ENCODE measurements at regions of chr11 and their contacts with region 1.

Region 1: GRCh38 chr11:63745304-63746170 is 23.0 kb downstream of the ZFTA start:
- DNase-seq: no peak
- ATAC-seq: peak; percentile 44

Region 2: GRCh38 chr11:63667995-63668795 is 77.3 kb before region 1 on chr11:
- intact Hi-C with region 1: loop called in 1 of 2 experiments (anchors 10 kb)
- DNase-seq: no peak
- ATAC-seq: no peak

Region 3: DNA sequence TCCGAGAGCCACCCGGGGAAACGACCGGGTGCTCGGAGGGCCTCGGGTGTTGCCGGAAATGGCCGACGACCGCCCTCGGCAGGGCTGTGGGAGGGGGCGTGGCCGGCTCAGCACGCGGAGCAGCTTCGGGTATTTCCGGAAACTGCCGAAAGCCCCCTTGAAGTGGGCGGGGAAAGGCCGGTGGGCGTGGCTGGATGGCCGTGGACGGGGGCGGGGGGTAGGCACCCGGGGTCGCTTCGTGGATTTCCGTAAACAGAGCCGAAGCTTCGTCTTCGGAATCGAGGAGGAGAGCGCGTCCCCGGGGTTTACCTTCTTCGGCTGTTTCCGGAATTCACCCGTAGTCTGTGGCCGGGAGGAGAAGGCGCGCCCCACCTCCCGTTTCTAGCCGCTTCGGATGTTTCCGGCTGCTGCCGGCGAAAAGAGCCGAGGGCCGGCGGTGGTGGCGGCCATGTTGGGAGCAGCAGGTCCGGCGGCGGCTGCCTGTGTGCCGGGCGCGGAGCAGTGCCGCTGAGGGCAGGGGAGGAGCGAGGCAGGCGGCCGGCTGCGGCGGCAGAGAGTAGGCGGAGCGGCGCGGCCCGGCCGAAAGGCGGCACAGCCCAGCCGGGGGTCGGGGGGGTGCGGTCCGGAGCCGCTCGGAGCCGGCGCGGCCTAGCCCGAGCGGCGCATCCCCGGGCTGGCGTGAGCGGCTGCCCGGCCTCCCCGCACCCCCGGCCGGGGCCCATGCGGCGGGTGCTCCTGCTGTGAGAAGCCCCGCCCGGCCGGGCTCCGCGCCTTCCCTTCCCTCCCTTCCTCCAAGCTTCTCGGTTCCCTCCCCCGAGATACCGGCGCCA is 93.4 kb after region 1 on chr11 and contains the start of gene MARK2:
- intact Hi-C with region 1: no loop called
- DNase-seq: peak; percentile 96 to 100
- ATAC-seq: peak; percentile 78
- total RNA-seq, gene MARK2: 91.8 to 100 TPM